Gastrocnemius medialis (tissue), 4 donors: ENCODE measurements at regions of chr1 and their contacts with region 1.

Region 1: DNA sequence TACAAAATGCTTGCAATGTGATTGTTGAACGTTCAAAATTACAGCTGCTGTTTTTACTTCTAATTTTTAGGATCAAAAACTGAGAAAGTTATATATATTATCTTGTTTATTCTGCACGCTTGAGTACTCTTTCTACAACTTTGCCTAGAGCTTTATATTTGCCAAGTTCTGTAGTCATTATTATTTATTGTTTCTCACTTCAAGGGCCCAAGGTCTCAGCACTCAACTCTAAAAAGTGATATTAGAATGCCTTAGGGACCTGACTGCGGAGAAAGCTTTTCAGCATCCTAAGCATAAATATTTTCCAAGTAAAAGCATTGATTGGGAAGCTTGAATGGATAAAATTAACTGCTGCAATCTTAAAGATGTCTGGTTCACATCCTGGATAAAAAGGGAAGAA is 83.6 kb downstream of the UBE2U start:
- DNase-seq: no peak
- ATAC-seq: no peak
- H3K4me3 ChIP-seq: no peak overlapping the region
- H3K27ac ChIP-seq: no peak overlapping the region
- H3K4me1 ChIP-seq: no peaks in the 10 kb centered on the region
- H3K27me3 ChIP-seq: no peaks in the 10 kb centered on the region
- CTCF ChIP-seq: no peak
- POLR2A ChIP-seq: no peak

Region 2: GRCh38 chr1:63892632-63893395 is 394.3 kb before region 1 on chr1:
- in situ Hi-C with region 1: no loop called
- intact Hi-C with region 1: no loop called
- DNase-seq: no peak
- ATAC-seq: peak; percentile 21 to 33
- H3K4me3 ChIP-seq: no peak overlapping the region
- H3K27ac ChIP-seq: peak overlapping the region in 2 of 4 donors; percentile 7 to 43
- H3K4me1 ChIP-seq: peaks cover 0 to 10% of the 10 kb centered on the region in 2 donors
- H3K27me3 ChIP-seq: no peaks in the 10 kb centered on the region
- CTCF ChIP-seq: no peak
- POLR2A ChIP-seq: no peak

Region 3: GRCh38 chr1:64171797-64172281 is 115.2 kb before region 1 on chr1:
- in situ Hi-C with region 1: no loop called
- intact Hi-C with region 1: no loop called
- DNase-seq: no peak
- ATAC-seq: no peak
- H3K4me3 ChIP-seq: no peak overlapping the region
- H3K27ac ChIP-seq: no peak overlapping the region
- H3K4me1 ChIP-seq: peaks cover 0 to 8% of the 10 kb centered on the region in 2 donors
- H3K27me3 ChIP-seq: no peaks in the 10 kb centered on the region
- CTCF ChIP-seq: no peak
- POLR2A ChIP-seq: no peak

Region 4: GRCh38 chr1:65083263-65083896 is 796.3 kb after region 1 on chr1:
- in situ Hi-C with region 1: no loop called
- intact Hi-C with region 1: loop called (anchors 5 kb)
- DNase-seq: no peak
- ATAC-seq: no peak
- H3K4me3 ChIP-seq: no peak overlapping the region
- H3K27ac ChIP-seq: no peak overlapping the region
- H3K4me1 ChIP-seq: no peaks in the 10 kb centered on the region
- H3K27me3 ChIP-seq: no peaks in the 10 kb centered on the region
- CTCF ChIP-seq: no peak
- POLR2A ChIP-seq: no peak